ENCODE measurements at regions of chr5 and their contacts with region 1.

Region 1: GRCh38 chr5:157575381-157576020 is at the start of gene ADAM19:
- DNase-seq: peak; percentile 62
- ATAC-seq: peak; percentile 89 to 93
- total RNA-seq, gene ADAM19: 19.0 to 57.5 TPM

Region 2: DNA sequence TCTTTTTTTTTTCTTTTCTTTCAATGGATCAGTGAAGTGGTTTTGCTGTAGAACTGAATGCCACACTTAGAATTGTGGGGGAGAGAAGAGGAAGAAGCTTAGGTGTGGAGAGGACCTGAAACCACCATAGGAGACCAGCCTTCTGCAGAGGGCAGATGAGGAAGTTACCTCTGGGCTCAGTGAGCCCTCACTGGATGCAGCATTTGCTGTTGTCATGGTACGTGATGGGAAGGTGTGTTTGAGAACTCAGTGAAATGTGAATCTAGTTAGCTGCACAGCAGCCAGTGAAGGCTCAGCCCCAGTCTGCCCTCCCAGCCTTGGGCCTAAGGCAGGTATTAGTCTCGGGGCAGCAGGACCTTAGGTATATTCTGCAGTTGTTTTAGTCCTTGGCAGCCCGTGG is 292.1 kb before region 1 on chr5:
- intact Hi-C with region 1: no loop called
- DNase-seq: no peak
- ATAC-seq: peak in 1 of 2 donors; percentile 32

Region 3: DNA sequence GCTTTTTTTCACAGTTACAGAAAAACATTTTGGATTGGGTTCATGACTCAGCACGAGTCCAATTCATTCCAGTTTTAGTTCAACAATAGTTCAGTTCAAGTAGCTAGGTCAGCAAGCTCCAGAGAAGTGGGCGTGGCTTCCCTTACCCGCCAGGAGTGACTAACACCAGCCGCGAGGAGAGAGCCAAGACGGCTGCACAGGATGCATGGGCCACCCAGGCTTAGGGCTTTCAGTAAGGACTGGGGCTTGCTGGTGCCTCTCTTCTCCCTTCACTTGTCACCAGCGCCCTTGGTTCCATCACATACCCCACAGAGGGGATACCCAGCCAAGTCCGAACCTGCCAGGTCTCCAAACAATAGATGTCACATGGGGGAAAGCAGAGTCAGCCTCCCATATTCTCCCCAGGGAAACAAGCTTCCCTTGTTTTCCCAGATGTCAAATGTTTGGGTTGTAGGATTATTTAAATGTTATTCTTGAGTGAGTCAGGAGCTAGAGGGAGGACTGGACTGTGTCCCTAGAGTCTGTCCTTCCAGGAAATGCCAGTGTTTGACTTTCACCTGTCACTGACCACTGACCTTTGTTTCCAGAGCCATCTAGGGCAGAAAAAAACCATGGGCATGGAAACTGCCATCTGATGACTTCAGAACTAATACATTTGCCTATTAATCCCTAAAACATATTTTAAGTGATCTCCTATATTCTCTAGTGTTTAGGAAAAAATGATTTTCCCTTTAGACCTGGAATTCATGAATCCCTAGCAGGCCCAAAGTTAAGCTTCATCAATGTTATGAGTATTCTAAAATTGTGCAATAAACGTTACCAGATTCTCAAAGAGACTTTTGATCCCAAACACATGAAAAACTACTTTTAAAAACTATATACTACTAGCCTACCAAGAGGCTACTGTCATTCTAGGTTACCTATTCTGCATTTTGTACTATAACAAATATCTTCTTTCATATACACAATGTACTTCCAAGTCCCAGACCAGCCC is 63.6 kb before region 1 on chr5:
- intact Hi-C with region 1: loop called in 1 of 2 experiments (anchors 5 kb)
- DNase-seq: peak; percentile 95
- ATAC-seq: peak; percentile 94 to 95

Region 4: DNA sequence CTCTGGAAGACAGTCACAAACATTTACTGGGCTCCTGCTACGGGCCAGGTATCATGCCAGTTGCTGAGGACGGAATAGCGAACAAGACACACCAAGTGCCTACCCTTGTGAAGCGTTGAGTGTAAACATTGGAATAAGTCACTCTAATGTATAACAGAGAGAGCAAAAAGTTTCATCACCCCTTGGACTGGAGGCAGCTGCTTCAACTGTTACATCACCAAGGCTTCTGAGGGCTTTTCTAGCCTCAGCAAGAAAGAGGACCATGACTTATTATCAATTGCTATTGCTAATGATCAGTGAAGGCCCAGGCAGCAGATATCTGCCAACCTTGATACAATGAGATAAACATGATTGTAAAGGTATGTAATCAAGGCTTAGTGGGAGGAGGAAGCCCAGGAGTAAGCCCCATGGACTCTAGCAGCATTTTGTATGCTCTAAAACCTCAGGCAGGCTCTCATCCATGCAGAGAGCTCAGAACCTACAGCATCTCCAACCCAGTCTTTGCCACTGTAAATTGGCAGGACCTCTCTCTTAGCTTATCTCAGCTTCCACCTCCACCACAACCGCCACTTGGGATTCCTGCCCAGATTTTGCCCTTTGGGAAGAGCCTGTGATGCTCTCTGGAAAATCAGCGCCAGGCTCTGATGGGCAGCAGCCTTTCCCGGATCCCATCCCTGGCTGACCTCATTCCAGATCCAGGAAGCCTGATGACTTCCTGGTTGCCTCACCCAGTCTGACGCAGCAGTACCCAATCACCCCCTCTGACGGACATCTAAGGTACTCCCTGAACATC is 54.4 kb before region 1 on chr5:
- intact Hi-C with region 1: loop called (anchors 5 to 10 kb)
- DNase-seq: peak; percentile 87
- ATAC-seq: peak; percentile 50 to 69